H1 (cell line): ENCODE measurements at regions of chr5 and their contacts with region 1.

Region 1: DNA sequence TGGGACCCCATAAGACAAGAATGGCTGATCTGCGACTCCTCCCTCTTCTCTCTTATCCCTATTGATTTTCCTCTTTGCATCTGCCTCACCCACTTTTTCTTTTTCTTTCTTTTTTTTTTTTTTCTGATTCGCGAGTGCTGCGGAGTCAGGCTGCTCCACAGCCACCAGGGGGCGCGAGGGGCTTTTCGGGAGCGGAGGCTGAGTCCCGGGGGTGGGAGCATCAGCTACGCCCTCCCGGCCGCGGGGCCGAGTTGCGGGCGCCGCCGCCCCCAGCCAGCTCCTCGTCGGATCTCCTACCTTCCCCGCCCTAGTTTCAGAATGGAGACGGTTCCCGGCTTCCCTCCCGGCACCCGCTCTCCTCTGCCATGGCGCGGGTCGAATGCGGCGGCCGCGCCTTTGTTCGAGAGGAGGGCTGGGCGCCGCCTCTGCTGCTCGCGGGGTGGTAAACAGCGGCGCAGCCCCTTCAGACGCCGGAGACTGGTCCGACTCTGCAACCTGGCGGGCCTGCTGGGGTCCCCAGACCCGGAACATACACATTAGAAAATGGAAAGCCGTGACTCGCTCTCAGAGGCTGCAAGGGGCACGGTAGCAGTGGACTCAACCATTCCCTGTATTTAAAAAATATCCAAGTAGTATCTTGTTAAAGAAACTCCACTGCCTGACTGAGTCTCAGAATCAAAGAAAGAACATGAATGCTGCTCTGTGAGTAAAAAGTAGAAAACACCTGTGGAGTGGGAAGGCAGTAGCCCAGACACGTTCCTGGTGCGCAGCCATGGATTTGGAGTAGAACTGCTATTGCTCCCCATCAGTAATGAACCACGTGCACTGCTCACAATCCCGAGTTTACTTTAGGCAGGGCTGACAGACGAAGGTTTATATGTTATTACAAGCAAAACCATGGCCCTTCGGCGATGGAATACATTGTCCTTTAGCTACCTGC is 55.7 kb downstream of the DPYSL3 start:
- DNase-seq: peak; percentile 70 to 94
- H3K4me3 ChIP-seq: peak overlapping the region; percentile 80 to 98 (median 94)
- H3K27ac ChIP-seq: peak overlapping the region; percentile 79; the same call in 1 of the 2 replicates
- H3K4me1 ChIP-seq: peaks cover 9 to 30% (median 25%) of the 10 kb centered on the region in 4 experiments; a peak in 6 of 7 replicates
- H3K27me3 ChIP-seq: no peaks in the 10 kb centered on the region
- CTCF ChIP-seq: peak; percentile 70 to 83 (median 70)
- EP300 ChIP-seq: no peak
- POLR2A ChIP-seq: peak in 1 of 2 experiments; percentile 58; a peak in 2 of 3 replicates
- RAD21 ChIP-seq: peak; percentile 76 to 77

Region 2: DNA sequence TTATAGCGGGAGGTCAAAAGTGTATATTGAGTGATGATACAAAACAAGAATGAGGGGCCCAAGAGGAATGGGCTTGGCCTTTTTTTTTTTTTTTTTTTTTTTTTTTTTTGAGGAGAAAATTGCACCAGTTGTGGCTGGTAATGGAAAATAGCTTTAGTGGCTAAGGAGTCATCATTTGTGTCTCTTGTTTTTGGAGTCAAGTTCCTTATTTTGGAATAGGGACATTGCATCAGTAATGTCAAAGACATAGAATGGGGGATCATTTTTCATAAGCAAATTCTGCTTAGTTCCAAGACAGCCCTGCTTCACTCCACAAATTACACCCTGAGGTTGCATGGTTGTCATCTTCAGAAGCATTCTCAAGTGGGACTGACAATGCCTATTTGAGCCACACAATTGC is 82.0 kb before region 1 on chr5:
- CTCF ChIA-PET with region 1: no interaction called
- POLR2A ChIA-PET with region 1: no interaction called
- DNase-seq: no peak
- H3K4me3 ChIP-seq: no peak overlapping the region
- H3K27ac ChIP-seq: no peak overlapping the region
- H3K4me1 ChIP-seq: peaks cover 0 to 2% (median 0%) of the 10 kb centered on the region in 4 experiments; a peak in 1 of 7 replicates
- H3K27me3 ChIP-seq: no peaks in the 10 kb centered on the region
- CTCF ChIP-seq: no peak
- EP300 ChIP-seq: no peak
- POLR2A ChIP-seq: no peak
- RAD21 ChIP-seq: no peak

Region 3: GRCh38 chr5:147439254-147439653 is 14.9 kb before region 1 on chr5:
- CTCF ChIA-PET with region 1: interaction called, 25 read pairs
- POLR2A ChIA-PET with region 1: interaction called, 9 read pairs
- DNase-seq: no peak
- H3K4me3 ChIP-seq: no peak overlapping the region
- H3K27ac ChIP-seq: no peak overlapping the region
- H3K4me1 ChIP-seq: peaks cover 0 to 17% (median 12%) of the 10 kb centered on the region in 4 experiments; a peak in 6 of 7 replicates
- H3K27me3 ChIP-seq: no peaks in the 10 kb centered on the region
- CTCF ChIP-seq: no peak
- EP300 ChIP-seq: no peak
- POLR2A ChIP-seq: no peak
- RAD21 ChIP-seq: no peak

Region 4: DNA sequence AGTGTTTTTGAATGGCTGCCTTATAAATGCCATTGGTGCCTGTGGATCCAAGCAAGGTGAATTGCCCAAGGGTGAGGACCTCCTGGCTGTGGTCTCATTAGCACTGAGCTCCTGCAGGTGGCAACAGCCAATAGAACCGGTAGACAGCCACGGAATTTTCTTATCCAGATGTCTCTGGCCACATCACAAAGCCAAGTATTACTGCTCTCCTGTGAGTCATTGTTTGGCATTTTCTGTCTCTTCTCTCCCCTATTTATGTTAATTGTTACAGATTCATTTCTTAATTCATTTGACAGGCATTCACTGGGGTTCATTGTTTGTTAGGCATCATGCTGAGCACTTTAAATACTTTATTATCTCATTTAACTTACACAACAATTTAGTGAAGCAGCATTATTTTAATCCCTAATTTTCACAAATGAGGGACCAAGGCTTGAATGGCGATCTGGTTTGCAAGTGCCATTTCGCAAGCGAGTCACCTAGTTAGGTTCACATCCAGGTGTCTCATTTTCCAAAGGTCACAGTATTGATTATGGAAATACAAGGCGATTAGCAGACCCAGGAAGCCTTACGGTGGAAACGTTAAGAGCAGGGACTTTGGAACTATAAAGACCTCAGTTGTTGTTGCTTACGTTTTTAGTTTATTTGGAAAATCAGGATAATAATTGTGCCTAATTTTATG is 113.9 kb after region 1 on chr5:
- CTCF ChIA-PET with region 1: interaction called, 10 read pairs
- POLR2A ChIA-PET with region 1: interaction called, 7 read pairs
- DNase-seq: peak in 1 of 2 experiments; percentile 86
- H3K4me3 ChIP-seq: peak overlapping the region in 1 of 4 experiments; percentile 15; a peak in 1 of 8 replicates
- H3K27ac ChIP-seq: peak overlapping the region; percentile 90
- H3K4me1 ChIP-seq: peaks cover 8 to 23% (median 20%) of the 10 kb centered on the region in 4 experiments; a peak in 5 of 7 replicates
- H3K27me3 ChIP-seq: no peaks in the 10 kb centered on the region
- CTCF ChIP-seq: peak in 2 of 3 experiments; percentile 2 to 8; a peak in 1 of 4 replicates
- EP300 ChIP-seq: peak in 1 of 2 experiments; percentile 73; a peak in 2 of 3 replicates
- POLR2A ChIP-seq: peak in 1 of 2 experiments; percentile 22; a peak in 1 of 3 replicates
- RAD21 ChIP-seq: no peak